ENCODE measurements at regions of chr15 and their contacts with region 1.

Region 1: DNA sequence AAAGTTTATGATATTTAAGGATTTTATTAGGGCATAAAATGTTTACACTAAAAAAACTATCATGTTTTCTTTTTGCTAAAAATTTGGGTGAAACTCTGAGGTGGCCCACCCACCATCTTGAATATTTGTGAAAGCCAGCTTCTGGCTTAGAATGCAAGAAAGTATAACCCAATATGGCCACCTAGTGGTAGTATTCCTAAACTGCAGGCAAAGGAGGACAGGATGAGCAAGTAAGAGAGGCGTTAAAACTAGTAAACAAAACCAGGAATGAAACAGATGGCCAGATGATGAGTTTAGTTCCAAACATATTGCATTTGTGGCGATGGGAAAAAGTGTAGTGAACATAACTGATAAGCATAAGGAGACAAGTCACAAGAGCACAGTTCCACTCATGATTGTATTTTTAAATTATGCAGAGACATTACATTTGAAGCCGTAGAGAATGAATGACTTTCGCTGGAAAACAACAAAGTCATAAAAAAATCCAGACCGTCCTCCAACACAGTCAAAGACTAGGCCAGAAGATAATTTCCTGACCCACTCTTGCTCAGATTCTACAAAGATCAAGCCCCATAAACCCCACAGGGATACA is 103.3 kb upstream of the PRTG start:
- DNase-seq: peak; percentile 57
- H3K4me3 Mint-ChIP-seq: no peak overlapping the region
- H3K27ac Mint-ChIP-seq: no peak overlapping the region
- H3K4me1 Mint-ChIP-seq: no peaks in the 10 kb centered on the region
- H3K27me3 Mint-ChIP-seq: no peaks in the 10 kb centered on the region

Region 2: DNA sequence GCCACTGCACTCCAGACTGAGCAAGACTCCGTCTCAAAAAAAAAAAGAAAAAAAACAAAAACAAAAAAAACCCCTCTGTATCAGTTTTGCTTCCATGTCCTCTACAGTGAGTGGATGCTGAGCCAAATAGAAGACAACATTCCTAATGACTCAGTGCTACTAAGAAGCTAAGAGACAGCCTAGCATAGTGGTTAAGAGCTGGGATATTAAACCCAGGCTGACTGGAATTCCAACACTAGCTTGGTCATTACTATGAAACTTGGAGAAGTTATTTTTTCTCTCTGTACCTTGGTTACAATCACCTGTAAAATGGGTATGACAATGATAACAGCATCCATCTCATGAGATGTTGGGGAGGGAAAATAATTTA is 197.2 kb before region 1 on chr15:
- CTCF ChIA-PET with region 1: interaction called, 26 read pairs
- DNase-seq: no peak
- H3K4me3 Mint-ChIP-seq: no peak overlapping the region
- H3K27ac Mint-ChIP-seq: no peak overlapping the region
- H3K4me1 Mint-ChIP-seq: no peaks in the 10 kb centered on the region
- H3K27me3 Mint-ChIP-seq: peaks cover 3% of the 10 kb centered on the region

Measured in activated naive CD4-positive, alpha-beta T cell treated with anti-CD3 and anti-CD28 coated beads, Interleukin-2, amount 10 ng/mL, durations not matched to agents 7 days and 5 days (primary cell).